ENCODE measurements at regions of chr4 and their contacts with region 1.

Region 1: GRCh38 chr4:73019462-73020047 is 50.0 kb downstream of the COX18 start:
- DNase-seq: peak; percentile 39
- CTCF ChIP-seq: peak; percentile 62

Region 2: GRCh38 chr4:72496112-72496511 is 523.4 kb before region 1 on chr4:
- in situ Hi-C with region 1: loop called (anchors 25 kb)
- DNase-seq: no peak
- CTCF ChIP-seq: no peak

Region 3: DNA sequence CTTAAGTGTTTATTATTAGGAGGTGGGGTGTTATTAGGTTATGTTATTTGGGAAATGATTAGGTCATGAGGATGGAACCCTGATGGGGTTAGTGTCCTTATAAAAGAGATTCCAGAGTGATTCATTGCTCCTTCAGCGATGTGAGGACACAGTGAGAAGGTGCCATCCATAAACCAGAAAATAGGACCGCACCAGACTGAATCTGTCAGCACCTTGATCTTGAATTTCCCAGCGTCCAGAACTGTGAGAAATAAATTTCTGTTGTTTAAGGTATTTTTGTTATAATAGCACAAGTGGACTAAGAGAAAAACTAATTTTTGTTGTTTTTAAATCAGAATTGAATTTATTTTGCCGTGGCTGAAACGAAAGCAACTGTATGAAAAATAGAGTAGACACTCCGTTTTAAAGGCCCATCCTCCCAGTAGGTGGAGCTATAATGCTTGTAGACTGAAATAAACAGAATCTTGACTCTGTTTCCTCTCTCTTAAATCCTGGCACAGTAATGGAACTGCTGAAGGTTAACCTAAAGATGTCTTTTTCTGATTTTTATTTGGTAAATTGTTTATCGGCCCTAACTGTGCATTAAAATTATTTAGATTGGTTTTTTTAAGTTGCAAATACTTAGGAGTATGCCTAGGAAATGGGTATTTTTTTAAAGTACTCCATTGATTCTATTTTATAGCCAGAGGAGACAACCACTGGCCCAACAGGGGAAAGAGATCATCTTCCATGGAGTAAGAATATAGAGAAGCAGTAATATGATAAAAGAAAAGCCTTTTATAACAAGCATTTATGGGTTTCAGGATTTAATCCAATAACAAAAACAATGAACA is 317.4 kb before region 1 on chr4:
- in situ Hi-C with region 1: loop called (anchors 25 kb)
- DNase-seq: peak; percentile 46
- CTCF ChIP-seq: peak; percentile 73

Region 4: GRCh38 chr4:72846280-72847111 is 173.1 kb before region 1 on chr4:
- in situ Hi-C with region 1: no loop called
- DNase-seq: no peak
- CTCF ChIP-seq: no peak

Region 5: DNA sequence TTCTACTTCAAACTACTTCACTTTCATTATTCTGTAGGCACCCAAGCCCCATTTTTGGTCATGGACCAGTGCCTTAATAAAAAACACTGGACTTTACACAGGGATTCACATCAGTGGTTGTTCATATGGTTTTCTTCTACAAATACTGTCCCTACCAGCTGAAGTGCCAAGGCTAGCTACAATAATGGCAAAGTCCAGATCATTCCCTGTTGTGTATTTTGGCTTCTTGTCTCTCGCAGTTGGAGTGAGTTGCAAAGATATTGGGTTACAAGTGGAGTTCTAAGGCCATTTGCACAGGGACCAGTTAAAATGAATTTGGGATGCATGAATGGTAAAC is 255.7 kb after region 1 on chr4:
- in situ Hi-C with region 1: no loop called
- DNase-seq: no peak
- CTCF ChIP-seq: no peak

Measured in GM13977 (cell line).